ENCODE measurements at regions of chr17 and their contacts with region 1.

Region 1: DNA sequence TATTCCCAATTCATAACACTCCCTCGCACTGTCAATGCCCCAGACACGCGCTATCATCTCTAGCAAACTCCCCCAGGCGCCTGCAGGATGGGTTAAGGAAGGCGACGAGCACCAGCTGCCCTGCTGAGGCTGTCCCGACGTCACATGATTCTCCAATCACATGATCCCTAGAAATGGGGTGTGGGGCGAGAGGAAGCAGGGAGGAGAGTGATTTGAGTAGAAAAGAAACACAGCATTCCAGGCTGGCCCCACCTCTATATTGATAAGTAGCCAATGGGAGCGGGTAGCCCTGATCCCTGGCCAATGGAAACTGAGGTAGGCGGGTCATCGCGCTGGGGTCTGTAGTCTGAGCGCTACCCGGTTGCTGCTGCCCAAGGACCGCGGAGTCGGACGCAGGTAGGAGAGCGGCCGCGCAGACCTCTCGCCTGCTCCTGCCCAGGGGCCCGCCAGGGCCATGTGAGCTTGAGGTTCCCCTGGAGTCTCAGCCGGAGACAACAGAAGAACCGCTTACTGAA is at the start of gene GRN:
- DNase-seq: peak; percentile 99
- H3K4me3 Mint-ChIP-seq: peak within 1 kb of the TSS; percentile 82
- H3K27ac Mint-ChIP-seq: peak within 1 kb of the TSS; percentile 94
- H3K4me1 Mint-ChIP-seq: peaks cover 12% of the 10 kb centered on the region
- H3K27me3 Mint-ChIP-seq: no peaks in the 10 kb centered on the region
- CTCF ChIP-seq: no peak
- total RNA-seq, gene GRN: 143 and 144 TPM in 2 replicates

Region 2: GRCh38 chr17:43723697-43724359 is 621.2 kb before region 1 on chr17:
- CTCF ChIA-PET with region 1: no interaction called
- POLR2A ChIA-PET with region 1: no interaction called
- intact Hi-C with region 1: no loop called
- DNase-seq: peak; percentile 77
- H3K4me3 Mint-ChIP-seq: no peak overlapping the region
- H3K27ac Mint-ChIP-seq: no peak overlapping the region
- H3K4me1 Mint-ChIP-seq: peaks cover 6% of the 10 kb centered on the region
- H3K27me3 Mint-ChIP-seq: peaks cover 13% of the 10 kb centered on the region
- CTCF ChIP-seq: no peak

Region 3: DNA sequence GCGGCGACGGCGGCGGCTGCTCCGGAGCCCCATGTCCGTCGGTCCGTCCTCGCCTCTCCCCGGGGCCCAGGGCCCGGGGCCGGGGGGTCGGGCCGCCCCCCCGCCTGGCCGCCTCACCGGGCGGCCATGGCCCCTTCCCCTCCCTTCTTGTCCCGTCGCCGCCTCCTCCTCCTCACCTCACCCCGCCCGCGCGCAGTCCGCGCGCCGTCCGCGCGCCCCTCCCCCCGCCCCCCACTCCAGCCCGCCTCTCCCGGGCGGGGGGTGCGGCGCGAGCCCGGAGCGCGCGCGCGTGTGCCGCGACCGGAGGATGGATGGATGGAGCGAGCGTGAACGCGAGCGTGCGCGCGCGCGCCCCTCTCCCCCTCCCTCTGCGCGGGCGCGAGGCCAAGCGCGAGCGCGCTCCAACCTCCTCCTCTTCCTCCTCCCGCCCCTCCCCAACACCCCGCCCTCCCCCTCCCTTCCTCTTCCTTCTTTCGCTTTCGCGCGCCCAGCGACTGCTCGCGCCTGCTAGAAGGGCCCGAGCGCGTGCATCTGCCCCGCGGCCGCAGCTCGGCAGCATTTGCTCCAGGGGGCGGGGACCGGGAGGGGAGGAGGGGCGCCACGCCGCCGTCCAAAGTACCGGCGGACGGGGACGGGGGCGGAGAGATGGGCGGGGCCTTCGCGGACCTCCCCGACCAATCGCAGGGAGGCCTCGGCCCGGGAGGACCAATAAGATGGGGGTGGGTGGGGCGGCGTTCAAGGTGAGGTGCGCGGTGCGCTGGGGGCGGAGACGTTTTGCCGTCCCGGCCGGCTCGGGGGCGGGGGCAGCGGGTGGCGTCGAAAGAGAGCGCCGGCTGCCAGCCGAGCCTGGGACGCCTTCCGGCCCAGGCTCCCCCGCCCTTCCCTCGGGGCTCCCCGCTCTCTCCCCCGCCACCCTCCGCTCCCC is 145.2 kb before region 1 on chr17 and contains the start of gene ATXN7L3:
- CTCF ChIA-PET with region 1: no interaction called
- POLR2A ChIA-PET with region 1: interaction called, 3 read pairs
- intact Hi-C with region 1: loop called (anchors 1 kb)
- DNase-seq: peak; percentile 97
- H3K4me3 Mint-ChIP-seq: peak within 1 kb of the TSS; percentile 89
- H3K27ac Mint-ChIP-seq: peak within 1 kb of the TSS; percentile 95
- H3K4me1 Mint-ChIP-seq: peaks cover 45% of the 10 kb centered on the region
- H3K27me3 Mint-ChIP-seq: no peaks in the 10 kb centered on the region
- CTCF ChIP-seq: no peak
- total RNA-seq, gene ATXN7L3: 65.7 and 74.8 TPM in 2 replicates

Region 4: DNA sequence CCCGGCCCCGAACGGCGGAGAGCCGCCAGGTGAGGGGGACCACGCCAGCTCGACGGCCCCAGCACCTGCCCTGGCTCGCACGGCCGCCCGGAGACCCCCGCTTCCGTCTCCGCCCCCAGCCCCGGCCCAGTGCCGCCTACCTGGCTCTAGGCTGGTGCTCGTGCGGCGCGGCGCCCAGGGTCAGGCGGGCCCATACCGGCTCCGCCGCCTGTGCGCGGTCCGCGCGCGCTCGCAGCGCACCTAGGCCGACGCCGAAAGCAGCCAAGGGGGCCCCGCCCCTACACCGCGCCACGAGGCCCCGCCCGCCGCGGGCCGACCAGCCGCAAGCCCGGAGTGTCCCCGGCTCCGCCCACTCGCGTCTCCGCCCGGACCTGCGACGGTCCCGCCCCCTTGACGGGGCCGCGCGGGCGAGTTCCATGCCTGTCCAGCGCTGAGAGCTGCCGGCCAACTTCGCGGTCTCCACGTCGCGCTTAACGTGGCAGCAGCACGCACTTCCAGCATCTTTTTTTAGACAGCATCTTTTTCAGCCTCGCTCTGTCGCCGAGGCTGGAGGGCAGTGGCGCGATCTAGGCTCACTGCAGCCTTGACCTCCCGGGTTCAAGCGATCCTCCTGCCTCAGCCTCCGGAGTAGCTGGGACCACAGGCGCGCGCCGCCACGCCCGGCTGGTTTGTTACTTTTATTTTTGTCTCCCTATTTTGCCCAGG is 20.3 kb before region 1 on chr17 and contains the start of gene SLC25A39:
- CTCF ChIA-PET with region 1: interaction called, 14 read pairs
- POLR2A ChIA-PET with region 1: interaction called, 38 read pairs
- intact Hi-C with region 1: loop called (anchors 2 kb)
- DNase-seq: peak; percentile 89
- H3K4me3 Mint-ChIP-seq: peak within 1 kb of the TSS; percentile 82
- H3K27ac Mint-ChIP-seq: peak within 1 kb of the TSS; percentile 93
- H3K4me1 Mint-ChIP-seq: no peaks in the 10 kb centered on the region
- H3K27me3 Mint-ChIP-seq: no peaks in the 10 kb centered on the region
- CTCF ChIP-seq: no peak
- total RNA-seq, gene SLC25A39: 157 and 169 TPM in 2 replicates

Region 5: GRCh38 chr17:44331249-44331760 is 13.7 kb before region 1 on chr17:
- CTCF ChIA-PET with region 1: interaction called, 20 read pairs
- POLR2A ChIA-PET with region 1: interaction called, 38 read pairs
- intact Hi-C with region 1: loop called (anchors 2 kb)
- DNase-seq: peak; percentile 80
- H3K4me3 Mint-ChIP-seq: peak overlapping the region; percentile 12
- H3K27ac Mint-ChIP-seq: no peak overlapping the region
- H3K4me1 Mint-ChIP-seq: peaks cover 6% of the 10 kb centered on the region
- H3K27me3 Mint-ChIP-seq: no peaks in the 10 kb centered on the region
- CTCF ChIP-seq: peak; percentile 74

Region 6: GRCh38 chr17:44651228-44651627 is 306.2 kb after region 1 on chr17:
- CTCF ChIA-PET with region 1: no interaction called
- POLR2A ChIA-PET with region 1: no interaction called
- intact Hi-C with region 1: no loop called
- DNase-seq: no peak
- H3K4me3 Mint-ChIP-seq: no peak overlapping the region
- H3K27ac Mint-ChIP-seq: no peak overlapping the region
- H3K4me1 Mint-ChIP-seq: no peaks in the 10 kb centered on the region
- H3K27me3 Mint-ChIP-seq: no peaks in the 10 kb centered on the region
- CTCF ChIP-seq: no peak